A673 (cell line): ENCODE measurements at regions of chr5 and their contacts with region 1.

Region 1: GRCh38 chr5:109907731-109908130 is 218.0 kb downstream of the MAN2A1 start:
- DNase-seq: peak; percentile 10
- H3K4me3 ChIP-seq: no peak overlapping the region
- H3K27ac ChIP-seq: no peak overlapping the region
- H3K4me1 ChIP-seq: peaks cover 8% of the 10 kb centered on the region
- H3K27me3 ChIP-seq: no peaks in the 10 kb centered on the region
- CTCF ChIP-seq: no peak

Region 2: GRCh38 chr5:109863752-109864151 is 44.0 kb before region 1 on chr5:
- CTCF ChIA-PET with region 1: no interaction called
- POLR2A ChIA-PET with region 1: no interaction called
- intact Hi-C with region 1: loop called (anchors 1 kb)
- DNase-seq: no peak
- H3K4me3 ChIP-seq: no peak overlapping the region
- H3K27ac ChIP-seq: no peak overlapping the region
- H3K4me1 ChIP-seq: peaks cover 52% of the 10 kb centered on the region
- H3K27me3 ChIP-seq: no peaks in the 10 kb centered on the region
- CTCF ChIP-seq: no peak